ENCODE measurements at regions of chr10 and their contacts with region 1.

Region 1: DNA sequence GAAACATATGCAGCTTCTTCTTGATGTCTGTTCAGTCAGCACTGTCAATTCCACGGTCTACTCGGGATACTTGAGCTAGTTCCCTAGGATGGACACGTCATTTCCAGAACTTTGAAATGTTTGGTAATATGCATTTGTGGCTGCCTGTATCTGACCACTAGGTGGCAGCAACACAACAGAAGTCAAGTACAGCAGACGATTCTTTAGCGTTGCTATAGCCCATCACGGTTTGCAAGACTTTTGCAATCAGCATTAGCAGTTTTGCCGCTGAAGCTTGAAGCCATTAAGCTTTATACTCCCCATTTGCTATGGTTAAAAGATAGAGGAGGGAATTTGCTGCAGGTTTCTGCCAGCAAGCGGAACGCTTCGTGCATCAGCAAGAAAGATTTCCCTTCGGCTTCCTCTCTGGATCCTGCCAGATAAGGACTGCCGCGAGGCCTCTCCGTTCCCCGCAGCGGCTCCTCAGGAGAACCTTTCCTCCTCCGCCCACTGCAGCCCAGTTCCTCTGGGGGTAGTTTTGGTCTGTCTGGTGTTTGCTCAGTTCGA is 63.5 kb downstream of the ABCC2 start:
- DNase-seq: peak; percentile 83
- H3K4me3 ChIP-seq: no peak overlapping the region
- CTCF ChIP-seq: peak; percentile 73

Region 2: GRCh38 chr10:99732033-99732912 is 113.6 kb before region 1 on chr10 and contains the starts of genes COX15 and CUTC:
- CTCF ChIA-PET with region 1: interaction called, 24 read pairs
- POLR2A ChIA-PET with region 1: no interaction called
- DNase-seq: peak; percentile 63
- H3K4me3 ChIP-seq: peak within 1 kb of the TSS; percentile 74
- CTCF ChIP-seq: peak; percentile 37

Region 3: DNA sequence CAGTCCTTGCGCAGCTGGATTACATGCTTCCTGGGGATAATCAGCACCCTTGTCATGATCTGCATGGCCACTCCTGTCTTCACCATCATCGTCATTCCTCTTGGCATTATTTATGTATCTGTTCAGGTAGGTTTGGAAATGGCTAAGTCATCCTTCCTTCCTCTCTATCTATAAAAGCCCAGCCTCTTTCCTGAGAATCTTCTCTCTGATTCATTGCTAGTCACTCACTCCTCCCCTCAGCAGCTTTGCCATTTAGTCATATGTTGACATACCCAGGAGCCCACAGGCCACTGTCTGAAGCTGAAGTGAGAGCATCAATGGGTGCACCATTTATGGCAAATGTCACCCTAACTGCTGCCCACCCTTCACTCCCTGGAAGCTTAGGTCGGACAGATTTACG is 11.5 kb before region 1 on chr10:
- CTCF ChIA-PET with region 1: interaction called, 54 read pairs
- POLR2A ChIA-PET with region 1: no interaction called
- DNase-seq: peak; percentile 49
- H3K4me3 ChIP-seq: no peak overlapping the region
- CTCF ChIP-seq: no peak

Region 4: DNA sequence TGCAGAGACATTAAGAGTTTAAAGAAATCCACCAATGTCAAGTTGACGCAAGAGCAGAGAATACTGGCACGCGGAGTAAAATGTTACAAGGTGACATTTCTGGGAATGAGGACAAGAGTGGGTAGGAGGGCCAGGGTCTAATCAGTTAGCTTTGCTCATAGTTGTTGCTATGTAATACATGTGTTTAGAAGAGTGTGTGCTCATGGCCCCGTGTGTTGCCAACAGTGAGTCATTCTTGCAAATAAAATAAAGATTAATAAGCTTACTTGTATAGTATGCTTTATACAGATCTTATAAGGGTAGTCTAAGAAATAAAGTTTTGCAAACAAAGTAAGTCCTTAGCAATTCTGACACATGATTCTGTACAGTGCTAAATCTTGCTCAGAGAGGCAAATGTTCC is 99.4 kb after region 1 on chr10:
- CTCF ChIA-PET with region 1: interaction called, 10 read pairs
- POLR2A ChIA-PET with region 1: no interaction called
- DNase-seq: peak; percentile 54
- H3K4me3 ChIP-seq: no peak overlapping the region
- CTCF ChIP-seq: no peak

Region 5: DNA sequence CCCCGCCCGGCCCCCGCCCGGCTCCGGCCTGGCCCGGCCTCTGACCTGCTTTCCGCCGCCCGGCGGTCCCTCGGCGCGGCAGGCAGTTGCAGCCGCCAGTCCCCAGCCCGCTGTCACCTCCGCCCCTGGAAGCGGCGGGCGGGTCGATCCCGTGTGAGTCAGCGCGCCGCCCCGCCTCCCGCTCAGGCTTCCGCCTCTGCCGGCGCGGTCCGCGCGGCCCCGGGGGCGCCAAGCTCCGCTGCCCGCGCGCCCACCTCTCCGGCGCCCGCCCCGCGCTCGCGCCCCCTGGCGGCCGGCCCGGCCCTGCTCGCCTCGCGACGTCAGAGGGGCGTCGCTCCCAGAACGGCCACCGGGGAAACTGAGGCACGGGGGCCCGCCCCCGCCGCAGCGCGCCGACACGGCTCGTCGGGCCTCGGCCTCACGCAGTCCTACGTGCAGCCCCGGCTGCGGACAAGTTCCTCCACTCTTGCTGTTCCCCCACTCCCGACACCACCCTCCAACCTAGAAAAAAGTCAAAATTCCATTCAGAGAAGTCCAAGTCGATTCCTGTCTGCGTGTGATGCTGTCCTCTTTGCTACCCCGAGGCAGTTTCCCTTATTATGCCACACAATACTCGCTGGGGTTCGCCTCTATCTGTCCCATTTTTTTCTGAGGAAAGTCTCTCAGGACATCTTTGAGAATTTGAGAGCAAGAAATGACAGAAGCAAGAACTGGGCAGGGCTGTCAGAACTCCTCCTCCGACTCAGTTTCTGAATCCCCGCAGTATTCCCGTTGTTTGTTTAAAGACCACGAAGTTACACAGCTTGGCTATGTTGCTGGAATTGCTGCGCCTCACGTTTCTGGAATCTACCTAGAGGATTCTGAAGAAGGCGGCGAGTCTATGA is 164.1 kb after region 1 on chr10 and contains the start of gene DNMBP:
- CTCF ChIA-PET with region 1: interaction called, 37 read pairs
- POLR2A ChIA-PET with region 1: no interaction called
- DNase-seq: no peak
- H3K4me3 ChIP-seq: peak within 1 kb of the TSS; percentile 85
- CTCF ChIP-seq: peak; percentile 43

Region 6: DNA sequence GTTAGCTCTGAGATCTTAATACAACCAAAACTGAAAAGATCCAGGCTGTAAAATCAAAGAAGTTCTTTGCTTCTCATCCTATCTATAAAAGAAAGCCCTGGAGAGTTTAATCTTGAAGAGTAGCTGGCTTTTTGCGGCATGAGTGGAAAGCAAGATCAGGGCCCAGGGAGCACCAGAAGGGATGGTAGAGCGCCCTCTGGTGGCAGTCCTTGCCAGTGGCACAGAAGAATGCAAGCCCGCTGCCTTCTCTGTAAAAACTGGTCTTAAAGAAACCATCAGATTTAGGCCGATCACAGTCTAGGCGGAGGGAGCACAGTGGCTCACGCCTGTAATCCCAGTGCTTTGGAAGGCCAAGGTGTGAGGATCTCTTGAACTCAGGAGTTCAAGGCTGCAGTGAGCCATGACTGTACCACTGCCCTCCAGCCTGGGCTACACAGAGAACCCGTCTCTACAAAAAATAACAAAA is 200.1 kb after region 1 on chr10:
- CTCF ChIA-PET with region 1: interaction called, 470 read pairs
- POLR2A ChIA-PET with region 1: interaction called, 3 read pairs
- DNase-seq: peak; percentile 42
- H3K4me3 ChIP-seq: no peak overlapping the region
- CTCF ChIP-seq: peak; percentile 89

Region 7: GRCh38 chr10:100232101-100232500 is 386.2 kb after region 1 on chr10:
- CTCF ChIA-PET with region 1: interaction called, 18 read pairs
- POLR2A ChIA-PET with region 1: no interaction called
- DNase-seq: no peak
- H3K4me3 ChIP-seq: no peak overlapping the region
- CTCF ChIP-seq: no peak

Measured in AG04449 (cell line).